Heart right ventricle (tissue), 16 donors: ENCODE measurements at regions of chr2 and their contacts with region 1.

Region 1: DNA sequence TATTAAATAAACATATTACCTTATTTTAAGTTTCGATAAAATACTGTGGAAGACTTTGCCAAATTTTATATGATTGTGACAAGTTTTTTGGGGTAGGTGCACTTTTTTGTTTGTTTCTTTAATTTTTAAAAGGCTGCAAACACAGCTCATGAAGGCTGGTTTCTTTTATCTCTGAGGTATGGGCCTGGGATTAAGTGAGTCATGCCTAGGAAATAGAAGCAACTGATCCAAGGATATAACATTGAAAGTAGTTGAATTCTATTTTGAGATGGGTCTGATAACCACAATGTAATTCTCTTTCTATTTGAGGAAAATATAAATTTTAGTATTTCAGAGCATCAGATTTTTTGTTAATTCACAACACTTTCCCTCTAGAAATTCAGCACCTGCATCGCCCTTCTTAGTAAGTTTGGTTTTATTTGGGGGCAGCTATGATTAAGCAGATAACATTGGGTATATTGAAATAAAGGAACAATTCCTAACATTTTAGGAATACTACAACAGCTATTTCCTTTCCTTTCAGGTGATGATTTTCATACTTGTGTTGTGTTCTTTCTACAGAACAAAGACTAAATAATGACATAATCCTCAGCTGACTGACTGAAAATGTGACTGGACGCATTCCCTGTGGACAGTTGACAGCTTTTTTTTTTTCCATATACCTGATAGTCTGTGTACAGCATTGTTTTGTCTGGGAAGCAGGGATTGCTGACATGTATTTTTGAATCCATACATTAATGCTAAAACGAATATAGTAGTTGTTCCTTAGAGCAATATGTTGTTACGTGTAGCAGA is 16.8 kb downstream of the RBM45 start:
- DNase-seq: no peak
- ATAC-seq: no peak
- H3K4me3 ChIP-seq: no peak overlapping the region
- H3K27ac ChIP-seq: no peak overlapping the region
- H3K4me1 ChIP-seq: no peaks in the 10 kb centered on the region
- H3K27me3 ChIP-seq: no peaks in the 10 kb centered on the region
- CTCF ChIP-seq: no peak

Region 2: DNA sequence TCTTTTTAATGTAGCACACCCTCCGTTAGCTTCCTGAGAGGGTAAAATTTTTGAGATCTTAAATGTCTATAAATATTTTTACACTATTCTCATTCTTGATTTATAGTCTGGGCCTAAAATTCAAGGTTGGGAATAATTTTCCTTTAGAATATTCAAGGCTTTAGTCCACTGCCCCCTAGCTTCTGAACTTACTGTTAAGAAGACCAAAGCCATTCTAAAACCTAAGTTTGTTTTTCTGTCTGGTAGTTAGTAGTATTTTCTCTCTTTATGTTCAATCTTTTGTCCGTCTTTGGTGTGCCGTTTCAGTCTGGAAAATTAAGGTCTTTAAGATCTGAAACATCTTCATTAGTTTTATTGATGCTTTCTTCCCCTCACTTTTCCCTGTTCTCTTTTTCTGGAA is 79.8 kb after region 1 on chr2:
- intact Hi-C with region 1: loop called in 1 of 10 experiments (anchors 5 kb)
- DNase-seq: no peak
- ATAC-seq: no peak
- H3K4me3 ChIP-seq: no peak overlapping the region
- H3K27ac ChIP-seq: no peak overlapping the region
- H3K4me1 ChIP-seq: peaks cover 0 to 5% (median 0%) of the 10 kb centered on the region in 9 donors
- H3K27me3 ChIP-seq: no peaks in the 10 kb centered on the region
- CTCF ChIP-seq: peak in 7 of 9 donors; percentile 20 to 52 (median 29)

Region 3: GRCh38 chr2:178280244-178280852 is 151.3 kb after region 1 on chr2:
- intact Hi-C with region 1: loop called in 9 of 10 experiments (anchors 1 to 10 kb)
- DNase-seq: peak in 1 of 2 donors; percentile 51
- ATAC-seq: peak in 6 of 8 donors; percentile 34 to 77 (median 58)
- H3K4me3 ChIP-seq: no peak overlapping the region
- H3K27ac ChIP-seq: no peak overlapping the region
- H3K4me1 ChIP-seq: peaks cover 0 to 20% (median 0%) of the 10 kb centered on the region in 9 donors
- H3K27me3 ChIP-seq: no peaks in the 10 kb centered on the region
- CTCF ChIP-seq: peak; percentile 73 to 86 (median 80)